K562 (cell line): ENCODE measurements at regions of chr5 and their contacts with region 1.

Region 1: GRCh38 chr5:76601470-76601869 is 21.7 kb downstream of the F2RL2 start:
- DNase-seq: peak; percentile 46 to 76 (median 56)
- ATAC-seq: peak; percentile 90
- H3K4me3 ChIP-seq: no peak overlapping the region
- H3K27ac ChIP-seq: no peak overlapping the region
- H3K4me1 ChIP-seq: no peaks in the 10 kb centered on the region
- H3K27me3 ChIP-seq: no peaks in the 10 kb centered on the region
- CTCF ChIP-seq: peak; percentile 77 to 91 (median 77)
- EP300 ChIP-seq: no peak
- POLR2A ChIP-seq: no peak
- RAD21 ChIP-seq: peak; percentile 87 to 96

Region 2: GRCh38 chr5:76641514-76642120 is 40.1 kb after region 1 on chr5:
- CTCF ChIA-PET with region 1: interaction called, 42 read pairs
- POLR2A ChIA-PET with region 1: no interaction called
- in situ Hi-C with region 1: loop called (anchors 5 kb)
- intact Hi-C with region 1: loop called (anchors 1 kb)
- DNase-seq: peak; percentile 61 to 81 (median 66)
- ATAC-seq: peak; percentile 88
- H3K4me3 ChIP-seq: no peak overlapping the region
- H3K27ac ChIP-seq: no peak overlapping the region
- H3K4me1 ChIP-seq: no peaks in the 10 kb centered on the region
- H3K27me3 ChIP-seq: no peaks in the 10 kb centered on the region
- CTCF ChIP-seq: peak; percentile 83 to 92 (median 83)
- EP300 ChIP-seq: no peak
- POLR2A ChIP-seq: no peak
- RAD21 ChIP-seq: peak; percentile 82 to 93

Region 3: GRCh38 chr5:76715736-76716455 is 114.4 kb after region 1 on chr5 and contains the start of gene F2R:
- CTCF ChIA-PET with region 1: no interaction called
- POLR2A ChIA-PET with region 1: no interaction called
- in situ Hi-C with region 1: no loop called
- intact Hi-C with region 1: loop called (anchors 2 kb)
- DNase-seq: peak; percentile 79 to 85 (median 80)
- ATAC-seq: peak; percentile 94
- H3K4me3 ChIP-seq: peak within 1 kb of the TSS; percentile 92
- H3K27ac ChIP-seq: peak within 1 kb of the TSS; percentile 83
- H3K4me1 ChIP-seq: peaks cover 10 to 18% of the 10 kb centered on the region in 2 experiments; a peak in 4 of 5 replicates
- H3K27me3 ChIP-seq: no peaks in the 10 kb centered on the region
- CTCF ChIP-seq: peak; percentile 34 to 76 (median 54); a peak in 5 of 6 replicates
- EP300 ChIP-seq: no peak
- POLR2A ChIP-seq: peak; percentile 66
- RAD21 ChIP-seq: peak; percentile 58 to 59
- polyA plus RNA-seq, gene F2R: 4.0 to 4.9 TPM

Region 4: GRCh38 chr5:76771705-76772405 is 170.4 kb after region 1 on chr5:
- CTCF ChIA-PET with region 1: interaction called, 24 read pairs
- POLR2A ChIA-PET with region 1: interaction called, 4 read pairs
- in situ Hi-C with region 1: no loop called
- intact Hi-C with region 1: loop called (anchors 1 kb)
- DNase-seq: peak in 1 of 4 experiments; percentile 19
- ATAC-seq: peak; percentile 52; the same call in 1 of the 3 replicates
- H3K4me3 ChIP-seq: no peak overlapping the region
- H3K27ac ChIP-seq: no peak overlapping the region
- H3K4me1 ChIP-seq: peaks cover 0 to 4% of the 10 kb centered on the region in 2 experiments; a peak in 2 of 5 replicates
- H3K27me3 ChIP-seq: no peaks in the 10 kb centered on the region
- CTCF ChIP-seq: no peak
- EP300 ChIP-seq: no peak
- POLR2A ChIP-seq: no peak
- RAD21 ChIP-seq: no peak

Region 5: DNA sequence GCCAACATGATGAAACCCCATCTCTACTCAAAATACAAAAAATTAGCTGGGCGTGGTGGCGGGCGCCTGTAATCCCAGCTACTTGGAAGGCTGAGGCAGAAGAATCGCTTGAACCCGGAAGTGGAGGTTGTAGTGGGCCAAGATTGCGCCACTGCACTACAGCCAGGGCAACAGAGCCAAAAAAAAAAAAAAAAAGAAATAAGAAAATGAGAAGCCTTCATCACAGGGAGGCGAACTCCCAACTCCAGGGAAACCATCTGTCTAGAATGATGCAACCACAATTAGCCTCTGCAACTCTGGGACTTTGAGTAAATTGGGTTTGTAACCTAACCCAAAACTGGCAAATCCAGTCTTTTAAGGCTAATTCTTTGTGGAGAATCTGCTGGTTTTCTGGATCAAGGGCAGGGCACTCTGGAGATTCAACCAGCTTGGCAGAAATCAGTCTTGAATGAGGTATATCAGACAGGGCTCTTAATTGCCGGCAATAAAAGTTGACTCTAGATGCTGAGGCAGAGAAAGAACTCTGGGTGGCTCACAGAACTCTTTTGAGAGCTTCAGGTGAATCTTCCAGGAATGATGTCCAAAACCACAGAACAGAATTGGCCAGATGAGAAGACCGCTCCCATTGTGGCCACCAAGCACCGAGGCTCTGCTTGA is 258.2 kb after region 1 on chr5:
- CTCF ChIA-PET with region 1: no interaction called
- POLR2A ChIA-PET with region 1: no interaction called
- in situ Hi-C with region 1: no loop called
- intact Hi-C with region 1: loop called (anchors 5 kb)
- DNase-seq: no peak
- ATAC-seq: no peak
- H3K4me3 ChIP-seq: no peak overlapping the region
- H3K27ac ChIP-seq: no peak overlapping the region
- H3K4me1 ChIP-seq: peaks cover 5 to 15% of the 10 kb centered on the region in 2 experiments; a peak in 4 of 5 replicates
- H3K27me3 ChIP-seq: no peaks in the 10 kb centered on the region
- CTCF ChIP-seq: no peak
- EP300 ChIP-seq: no peak
- POLR2A ChIP-seq: no peak
- RAD21 ChIP-seq: no peak

Region 6: GRCh38 chr5:77015938-77016569 is 414.6 kb after region 1 on chr5:
- CTCF ChIA-PET with region 1: interaction called, 9 read pairs
- POLR2A ChIA-PET with region 1: no interaction called
- in situ Hi-C with region 1: loop called (anchors 10 kb)
- intact Hi-C with region 1: loop called (anchors 1 kb)
- DNase-seq: peak in 2 of 4 experiments; percentile 21 to 66
- ATAC-seq: peak; percentile 75
- H3K4me3 ChIP-seq: no peak overlapping the region
- H3K27ac ChIP-seq: no peak overlapping the region
- H3K4me1 ChIP-seq: no peaks in the 10 kb centered on the region
- H3K27me3 ChIP-seq: peaks cover 0 to 4% of the 10 kb centered on the region in 2 experiments; a peak in 1 of 5 replicates
- CTCF ChIP-seq: peak; percentile 33 to 64 (median 47); a peak in 4 of 6 replicates
- EP300 ChIP-seq: no peak
- POLR2A ChIP-seq: no peak
- RAD21 ChIP-seq: peak; percentile 82 to 83

Region 7: GRCh38 chr5:77168161-77168875 is 566.8 kb after region 1 on chr5:
- CTCF ChIA-PET with region 1: no interaction called
- POLR2A ChIA-PET with region 1: no interaction called
- in situ Hi-C with region 1: no loop called
- intact Hi-C with region 1: no loop called
- DNase-seq: no peak
- ATAC-seq: no peak
- H3K4me3 ChIP-seq: no peak overlapping the region
- H3K27ac ChIP-seq: no peak overlapping the region
- H3K4me1 ChIP-seq: peaks cover 4 to 5% of the 10 kb centered on the region in 2 experiments; a peak in 2 of 5 replicates
- H3K27me3 ChIP-seq: peaks cover 2 to 29% of the 10 kb centered on the region in 2 experiments; a peak in 4 of 5 replicates
- CTCF ChIP-seq: no peak
- EP300 ChIP-seq: no peak
- POLR2A ChIP-seq: no peak
- RAD21 ChIP-seq: no peak